Vagina (tissue), 2 donors: ENCODE measurements at regions of chr3 and their contacts with region 1.

Region 1: GRCh38 chr3:150183678-150184425 is 213.2 kb upstream of the PFN2 start:
- DNase-seq: no peak
- H3K4me3 ChIP-seq: peak overlapping the region; percentile 8 to 37
- H3K27ac ChIP-seq: no peak overlapping the region
- H3K4me1 ChIP-seq: peaks cover 5% of the 10 kb centered on the region
- H3K27me3 ChIP-seq: no peaks in the 10 kb centered on the region
- CTCF ChIP-seq: peak; percentile 6 to 78 (median 26)
- POLR2A ChIP-seq: no peak

Region 2: DNA sequence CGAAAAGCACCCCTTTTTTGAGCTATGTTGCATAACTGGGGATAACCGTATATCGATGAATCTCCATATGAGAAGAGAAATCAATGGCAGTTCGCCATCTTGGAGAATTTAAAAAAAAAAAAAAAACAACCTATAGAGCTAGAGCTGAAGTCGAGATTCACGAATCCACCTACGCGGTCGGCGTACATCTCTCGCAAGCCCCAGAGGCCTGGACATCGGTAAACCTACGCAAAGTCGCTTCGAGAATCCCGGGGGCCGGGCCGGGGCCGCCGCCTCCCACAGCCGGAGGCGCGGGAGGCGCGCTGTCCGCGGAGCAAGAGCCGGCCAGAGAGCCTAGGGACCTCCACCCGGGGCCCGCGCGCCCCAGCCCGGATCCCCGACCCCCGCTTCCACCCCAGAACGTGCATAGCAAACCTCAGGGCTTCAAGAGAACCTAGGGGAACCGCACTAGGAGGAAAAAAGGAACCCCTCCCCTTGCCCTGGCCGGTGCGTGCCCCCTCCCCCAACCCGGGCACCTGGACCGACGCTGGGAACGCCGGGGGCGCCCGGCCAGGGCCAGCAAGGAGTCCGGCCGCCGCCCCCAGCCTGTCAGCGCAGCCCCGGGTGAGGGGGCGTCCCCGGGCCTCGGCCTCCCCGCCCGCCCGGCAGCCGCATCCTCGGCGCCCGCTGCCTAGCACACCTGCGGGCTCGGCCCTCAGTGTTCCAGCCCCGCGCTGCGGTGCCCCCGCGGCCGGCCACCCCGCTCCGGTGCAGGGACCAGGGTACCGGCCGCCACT is 213.7 kb before region 1 on chr3:
- intact Hi-C with region 1: loop called (anchors 2 kb)
- DNase-seq: peak in 1 of 2 donors; percentile 91
- H3K4me3 ChIP-seq: peak overlapping the region; percentile 91 to 95
- H3K27ac ChIP-seq: peak overlapping the region; percentile 94
- H3K4me1 ChIP-seq: peaks cover 22% of the 10 kb centered on the region
- H3K27me3 ChIP-seq: no peaks in the 10 kb centered on the region
- CTCF ChIP-seq: no peak
- POLR2A ChIP-seq: no peak

Region 3: GRCh38 chr3:150469031-150469942 is 285.4 kb after region 1 on chr3:
- intact Hi-C with region 1: no loop called
- DNase-seq: peak in 1 of 2 donors; percentile 90
- H3K4me3 ChIP-seq: no peak overlapping the region
- H3K27ac ChIP-seq: peak overlapping the region; percentile 74
- H3K4me1 ChIP-seq: peaks cover 6% of the 10 kb centered on the region
- H3K27me3 ChIP-seq: no peaks in the 10 kb centered on the region
- CTCF ChIP-seq: no peak
- POLR2A ChIP-seq: no peak